H1 (cell line): ENCODE measurements at regions of chr5 and their contacts with region 1.

Region 1: GRCh38 chr5:116442095-116442534 is 132.5 kb downstream of the SEMA6A start:
- DNase-seq: no peak
- H3K4me3 ChIP-seq: no peak overlapping the region
- H3K27ac ChIP-seq: no peak overlapping the region
- H3K4me1 ChIP-seq: peaks cover 4 to 35% (median 17%) of the 10 kb centered on the region in 4 experiments
- H3K27me3 ChIP-seq: peaks cover 0 to 13% (median 3%) of the 10 kb centered on the region in 4 experiments; a peak in 3 of 7 replicates
- CTCF ChIP-seq: no peak
- EP300 ChIP-seq: no peak
- POLR2A ChIP-seq: no peak
- RAD21 ChIP-seq: no peak

Region 2: DNA sequence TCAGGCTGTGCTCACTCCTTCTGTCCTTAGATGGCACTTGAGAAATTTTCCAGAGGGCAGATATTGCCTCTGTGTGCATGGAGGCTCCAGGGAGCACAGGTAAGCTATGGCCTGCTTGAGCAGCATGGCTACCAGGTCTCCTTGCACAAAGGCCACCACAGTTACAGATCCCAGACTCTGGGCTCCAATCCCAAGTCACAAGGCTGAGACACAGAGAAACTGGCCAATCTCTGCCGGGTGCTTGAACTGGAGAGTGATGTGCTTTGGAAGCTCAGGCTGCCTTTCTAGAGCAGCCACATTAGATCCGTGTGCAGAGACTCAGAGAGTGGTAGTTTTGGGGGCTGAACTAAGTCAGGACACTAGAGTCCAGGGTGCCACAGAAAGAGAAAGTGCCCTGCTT is 13.1 kb before region 1 on chr5:
- CTCF ChIA-PET with region 1: interaction called, 3 read pairs
- POLR2A ChIA-PET with region 1: interaction called, 14 read pairs
- DNase-seq: no peak
- H3K4me3 ChIP-seq: no peak overlapping the region
- H3K27ac ChIP-seq: no peak overlapping the region
- H3K4me1 ChIP-seq: no peaks in the 10 kb centered on the region
- H3K27me3 ChIP-seq: no peaks in the 10 kb centered on the region; a peak in 1 of 7 replicates
- CTCF ChIP-seq: no peak
- EP300 ChIP-seq: no peak
- POLR2A ChIP-seq: no peak
- RAD21 ChIP-seq: no peak